ENCODE measurements at regions of chr20 and their contacts with region 1.

Region 1: DNA sequence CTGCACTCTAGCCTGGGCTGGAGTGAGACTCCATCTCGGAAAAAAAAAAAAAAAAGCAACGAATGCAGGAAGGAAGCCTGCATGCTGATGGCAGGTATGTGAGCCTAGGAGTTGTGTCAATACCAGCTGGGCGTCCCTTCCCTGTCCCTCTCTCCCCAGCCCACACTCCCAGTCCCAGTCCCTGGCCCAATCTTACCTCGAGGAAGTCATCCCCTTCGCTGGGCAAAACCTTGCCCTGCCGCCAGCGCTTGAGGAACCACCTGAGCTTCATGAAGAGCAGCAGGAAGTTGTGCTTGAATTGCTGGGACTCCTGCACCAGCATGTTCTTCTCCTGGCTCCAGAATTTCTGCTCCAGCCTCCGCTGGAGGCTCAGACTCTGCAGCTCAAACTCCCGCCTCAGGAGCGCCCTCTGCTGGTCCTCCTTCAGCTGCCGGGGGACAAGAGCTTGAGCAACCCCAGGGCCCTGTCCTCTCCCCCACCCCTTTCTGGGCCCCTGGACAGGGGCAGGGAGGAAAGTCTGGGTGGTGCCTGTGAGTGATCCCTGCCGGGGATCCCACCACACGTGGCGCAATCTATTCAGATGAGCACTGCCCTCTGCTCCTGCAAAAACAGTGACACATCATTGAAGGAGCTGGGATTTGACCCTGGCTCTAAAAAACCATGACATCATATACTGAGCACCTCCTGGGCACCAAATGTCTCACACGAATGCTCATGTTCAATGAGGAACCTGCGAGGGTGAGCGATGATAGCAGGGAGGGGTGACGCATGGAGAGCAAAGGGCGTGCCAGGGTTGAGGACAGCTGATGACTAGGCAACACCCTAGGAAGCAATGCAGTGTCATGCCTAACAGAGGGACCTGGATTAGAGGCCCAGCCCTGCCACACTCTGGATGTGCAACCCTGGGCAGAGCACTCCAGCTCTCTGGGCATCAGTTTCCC is 35.0 kb upstream of the DSN1 start:
- DNase-seq: no peak
- ATAC-seq: peak; percentile 88
- H3K4me3 ChIP-seq: no peak overlapping the region
- H3K27ac ChIP-seq: no peak overlapping the region
- H3K4me1 ChIP-seq: no peaks in the 10 kb centered on the region; the same call in 1 of the 2 replicates
- H3K27me3 ChIP-seq: no peaks in the 10 kb centered on the region
- CTCF ChIP-seq: peak; percentile 72 to 91 (median 85)
- EP300 ChIP-seq: no peak
- POLR2A ChIP-seq: no peak
- RAD21 ChIP-seq: peak; percentile 56

Region 2: DNA sequence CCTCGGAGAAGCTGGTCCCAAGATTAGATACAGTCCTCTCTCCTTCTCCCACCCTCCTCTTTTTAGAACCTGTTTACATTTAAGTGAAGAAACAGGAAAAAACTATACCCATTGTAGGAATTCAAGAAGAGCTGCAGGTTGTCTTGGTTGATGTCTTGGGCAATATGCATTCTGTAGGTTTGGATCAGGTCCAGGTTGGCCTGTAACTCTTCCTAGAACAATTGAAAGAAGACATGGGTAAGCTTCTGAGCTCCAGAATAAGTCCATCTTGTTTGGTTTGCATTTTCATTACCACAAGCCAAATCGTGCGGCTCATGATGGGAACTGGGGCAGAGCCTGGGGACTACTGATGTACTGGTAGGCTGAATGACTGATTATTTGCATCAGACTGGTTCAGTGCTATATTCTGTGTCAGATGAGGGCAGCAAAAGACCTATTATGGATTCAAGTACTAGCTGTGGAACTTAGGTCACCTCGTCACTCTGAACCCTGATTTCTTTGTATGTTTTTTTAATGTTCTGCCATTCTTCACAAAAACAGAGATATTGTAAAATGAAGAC is 142.3 kb before region 1 on chr20:
- CTCF ChIA-PET with region 1: interaction called, 11 read pairs
- POLR2A ChIA-PET with region 1: no interaction called
- RAD21 ChIA-PET with region 1: interaction called, 5 read pairs
- SMC1A ChIA-PET with region 1: interaction called, 3 read pairs
- in situ Hi-C with region 1: no loop called
- intact Hi-C with region 1: no loop called
- DNase-seq: no peak
- ATAC-seq: no peak
- H3K4me3 ChIP-seq: no peak overlapping the region
- H3K27ac ChIP-seq: no peak overlapping the region
- H3K4me1 ChIP-seq: no peaks in the 10 kb centered on the region
- H3K27me3 ChIP-seq: no peaks in the 10 kb centered on the region
- CTCF ChIP-seq: peak in 2 of 3 experiments; percentile 14 to 42; a peak in 2 of 6 replicates
- EP300 ChIP-seq: no peak
- POLR2A ChIP-seq: no peak
- RAD21 ChIP-seq: peak; percentile 38; the same call in 1 of the 2 replicates

Region 3: DNA sequence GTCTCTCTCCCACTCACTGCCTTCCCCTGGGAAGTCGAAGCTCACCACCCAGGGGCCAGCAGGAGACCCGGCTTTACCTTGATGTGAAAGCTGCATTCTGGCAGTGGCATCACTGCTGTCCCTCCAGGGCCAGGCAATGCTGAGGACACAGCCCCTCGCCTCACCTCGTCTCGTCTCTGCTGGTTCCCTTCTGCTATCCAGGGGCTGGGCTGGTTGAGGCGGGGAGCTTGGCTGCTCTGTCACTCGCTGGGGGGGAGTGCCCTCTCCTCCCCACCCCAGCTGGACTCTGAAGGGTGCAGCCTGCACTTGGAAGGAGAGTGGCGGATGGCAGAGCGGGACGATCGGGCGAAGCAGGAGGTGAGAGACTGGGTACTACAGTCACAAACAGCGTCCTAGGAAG is 22.3 kb before region 1 on chr20:
- CTCF ChIA-PET with region 1: interaction called, 12 read pairs
- POLR2A ChIA-PET with region 1: interaction called, 3 read pairs
- RAD21 ChIA-PET with region 1: no interaction called
- SMC1A ChIA-PET with region 1: no interaction called
- in situ Hi-C with region 1: no loop called
- intact Hi-C with region 1: no loop called
- DNase-seq: no peak
- ATAC-seq: no peak
- H3K4me3 ChIP-seq: no peak overlapping the region
- H3K27ac ChIP-seq: no peak overlapping the region
- H3K4me1 ChIP-seq: no peaks in the 10 kb centered on the region
- H3K27me3 ChIP-seq: no peaks in the 10 kb centered on the region
- CTCF ChIP-seq: no peak
- EP300 ChIP-seq: no peak
- POLR2A ChIP-seq: no peak
- RAD21 ChIP-seq: no peak

Region 4: DNA sequence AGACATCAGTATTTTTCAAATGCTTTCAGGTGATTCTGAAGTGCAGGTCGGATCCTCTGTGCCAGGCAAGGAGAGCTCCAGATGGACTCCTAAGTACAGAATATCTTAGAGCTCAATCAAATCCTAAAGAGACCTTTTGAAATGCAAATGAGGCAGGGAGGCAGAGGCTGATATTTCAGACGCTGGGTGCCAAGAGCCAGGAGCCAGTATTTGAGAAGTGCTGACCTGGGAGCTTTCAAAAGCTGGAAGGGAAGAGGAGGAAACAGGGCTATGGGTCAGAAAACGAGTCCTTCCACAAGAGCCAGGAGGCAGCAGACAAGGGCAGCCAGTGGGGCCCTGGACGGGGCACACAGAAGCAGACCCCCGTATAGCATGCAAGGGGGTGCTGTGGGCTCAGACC is 11.1 kb after region 1 on chr20:
- CTCF ChIA-PET with region 1: interaction called, 29 read pairs
- POLR2A ChIA-PET with region 1: no interaction called
- RAD21 ChIA-PET with region 1: interaction called, 4 read pairs
- SMC1A ChIA-PET with region 1: no interaction called
- in situ Hi-C with region 1: no loop called
- intact Hi-C with region 1: no loop called
- DNase-seq: no peak
- ATAC-seq: no peak
- H3K4me3 ChIP-seq: no peak overlapping the region
- H3K27ac ChIP-seq: no peak overlapping the region
- H3K4me1 ChIP-seq: no peaks in the 10 kb centered on the region
- H3K27me3 ChIP-seq: no peaks in the 10 kb centered on the region
- CTCF ChIP-seq: no peak
- EP300 ChIP-seq: no peak
- POLR2A ChIP-seq: no peak
- RAD21 ChIP-seq: no peak

Region 5: DNA sequence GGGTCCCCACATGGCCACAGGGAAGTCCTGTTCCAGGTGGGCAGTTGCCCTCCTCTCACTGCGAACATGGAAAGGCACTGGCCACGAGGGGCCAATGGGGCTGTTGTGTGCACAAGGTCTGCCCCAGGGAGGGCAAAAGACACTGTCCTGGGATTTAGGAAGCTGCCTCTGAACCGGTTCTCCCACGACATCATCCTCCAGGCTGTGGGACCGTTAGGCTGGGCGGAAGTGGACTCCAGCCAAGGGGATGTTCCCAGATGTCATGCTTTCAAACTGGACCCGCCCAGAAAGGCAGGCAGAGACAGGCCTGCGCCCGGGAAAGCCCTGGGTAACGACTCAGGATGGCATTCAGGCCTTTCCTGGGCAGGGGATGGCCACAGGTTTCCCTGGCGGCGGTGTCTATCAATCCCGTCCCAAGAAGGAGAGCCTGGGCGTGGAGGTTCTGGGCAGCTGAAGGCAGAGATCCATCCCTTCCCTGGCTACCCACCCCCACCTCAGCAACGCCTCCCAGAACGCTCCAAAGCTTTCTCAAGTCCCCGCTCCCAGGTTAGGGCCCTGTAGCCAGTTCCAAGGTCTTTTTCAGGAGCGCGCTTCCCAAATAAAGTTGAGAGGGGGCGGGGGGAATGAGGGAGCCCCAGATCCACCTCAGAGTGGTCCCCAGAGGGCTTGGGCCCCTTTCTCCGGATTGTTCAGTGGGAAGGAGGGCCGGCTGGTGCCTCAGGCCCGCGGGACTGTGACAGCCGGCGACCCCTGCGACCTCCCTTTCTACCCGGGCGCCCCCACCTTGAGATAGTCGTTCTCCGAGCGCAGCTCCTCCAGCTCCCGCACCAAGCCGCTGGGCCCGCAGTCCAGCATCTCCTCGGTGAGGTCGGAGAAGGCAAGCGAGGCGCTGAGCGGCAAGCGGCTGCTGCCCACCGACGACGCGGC is 53.6 kb after region 1 on chr20:
- CTCF ChIA-PET with region 1: interaction called, 22 read pairs
- POLR2A ChIA-PET with region 1: no interaction called
- RAD21 ChIA-PET with region 1: interaction called, 9 read pairs
- SMC1A ChIA-PET with region 1: interaction called, 7 read pairs
- in situ Hi-C with region 1: no loop called
- intact Hi-C with region 1: loop called (anchors 5 kb)
- DNase-seq: no peak
- ATAC-seq: no peak
- H3K4me3 ChIP-seq: peak overlapping the region; percentile 80
- H3K27ac ChIP-seq: no peak overlapping the region
- H3K4me1 ChIP-seq: peaks cover 26% of the 10 kb centered on the region
- H3K27me3 ChIP-seq: no peaks in the 10 kb centered on the region
- CTCF ChIP-seq: no peak
- EP300 ChIP-seq: no peak
- POLR2A ChIP-seq: no peak
- RAD21 ChIP-seq: no peak

Region 6: DNA sequence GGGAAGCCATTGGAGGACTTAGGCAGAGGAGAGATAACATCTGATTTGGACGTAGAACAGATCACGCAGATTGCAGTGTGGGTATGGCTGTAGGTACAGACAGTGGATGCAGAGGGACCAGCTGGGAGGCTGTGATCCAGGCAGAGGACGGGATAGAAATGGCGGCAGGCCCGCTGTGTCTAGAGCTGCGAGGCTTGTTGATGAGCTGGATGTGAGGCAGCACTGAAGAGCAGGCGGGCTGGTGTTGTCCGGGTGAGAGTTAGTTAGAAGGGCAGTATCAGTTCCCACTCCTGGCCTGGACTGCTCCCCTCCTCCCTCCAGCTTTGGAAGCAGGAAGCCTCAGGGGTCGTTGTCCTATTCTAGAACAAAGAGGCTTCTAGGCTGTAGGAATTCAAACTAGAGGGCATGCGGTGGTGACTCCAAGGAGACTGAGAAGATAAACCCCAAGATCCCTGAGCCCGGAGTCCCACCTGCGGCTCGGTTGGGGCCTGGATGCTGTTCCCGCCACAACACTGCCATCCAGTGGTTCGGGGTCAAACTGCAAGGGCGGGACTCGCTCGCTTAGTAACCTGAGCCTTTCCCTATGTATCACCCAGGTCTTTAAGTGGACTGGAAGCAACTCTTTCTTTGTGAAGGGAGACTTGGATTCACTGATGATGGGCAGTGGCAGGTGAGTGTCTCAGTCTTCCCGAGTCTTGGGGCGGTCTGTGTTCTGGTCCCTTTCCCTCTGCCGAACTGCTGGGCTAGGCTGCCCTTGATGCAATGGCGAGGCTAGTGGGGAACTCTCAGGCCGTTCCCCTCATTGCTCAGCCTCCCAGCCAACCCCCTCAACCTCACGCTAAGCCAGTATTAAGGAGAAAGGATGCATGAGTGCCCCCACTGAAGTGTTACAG is 78.5 kb after region 1 on chr20:
- CTCF ChIA-PET with region 1: interaction called, 46 read pairs
- POLR2A ChIA-PET with region 1: no interaction called
- RAD21 ChIA-PET with region 1: interaction called, 20 read pairs
- SMC1A ChIA-PET with region 1: interaction called, 12 read pairs
- in situ Hi-C with region 1: no loop called
- intact Hi-C with region 1: loop called (anchors 5 kb)
- DNase-seq: peak; percentile 56
- ATAC-seq: peak; percentile 95
- H3K4me3 ChIP-seq: no peak overlapping the region
- H3K27ac ChIP-seq: 0 out of 2 replicates have a peak overlapping the region, but pooled peaks have one; percentile 9
- H3K4me1 ChIP-seq: peaks cover 9% of the 10 kb centered on the region
- H3K27me3 ChIP-seq: no peaks in the 10 kb centered on the region
- CTCF ChIP-seq: peak; percentile 97 to 99 (median 98)
- EP300 ChIP-seq: no peak
- POLR2A ChIP-seq: no peak
- RAD21 ChIP-seq: peak; percentile 96

Region 7: DNA sequence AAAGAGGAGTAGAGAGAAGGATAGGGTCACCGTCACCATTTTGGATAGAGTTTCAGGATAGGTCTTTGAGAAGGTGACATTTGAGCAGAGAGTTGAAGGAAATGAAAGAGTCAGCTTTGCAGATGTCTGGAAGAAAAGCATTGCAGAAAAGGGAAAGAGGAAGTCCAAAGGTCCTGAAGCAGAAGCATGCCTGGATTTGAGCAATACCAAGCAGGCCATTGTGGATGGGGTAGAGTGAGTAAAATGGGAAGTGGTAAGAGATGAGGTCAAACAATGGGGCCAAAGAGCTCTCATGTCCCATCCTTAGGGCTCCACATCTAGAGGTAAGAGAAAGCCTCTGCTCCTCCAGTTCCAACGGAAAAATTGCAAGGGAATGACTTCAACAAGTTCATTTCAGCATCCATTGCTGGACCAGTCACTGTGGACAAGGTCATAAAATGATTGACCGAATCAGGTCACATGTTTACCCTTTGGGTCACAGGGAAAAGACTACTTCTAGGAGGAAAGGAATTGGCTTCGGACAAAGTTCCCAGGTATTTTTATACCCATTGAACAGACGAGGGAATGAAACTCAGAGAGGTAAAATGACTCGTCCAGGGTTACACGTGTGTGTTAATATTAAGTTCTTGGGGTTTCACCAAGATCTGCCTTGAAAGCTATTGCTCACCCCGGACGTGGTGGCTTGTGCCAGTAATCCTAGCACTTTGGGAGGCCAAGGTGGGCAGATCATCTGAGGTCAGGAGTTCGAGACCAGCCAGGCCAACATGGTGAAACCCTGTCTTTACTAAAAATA is 149.5 kb after region 1 on chr20:
- CTCF ChIA-PET with region 1: no interaction called
- POLR2A ChIA-PET with region 1: no interaction called
- RAD21 ChIA-PET with region 1: no interaction called
- SMC1A ChIA-PET with region 1: no interaction called
- in situ Hi-C with region 1: no loop called
- intact Hi-C with region 1: no loop called
- DNase-seq: no peak
- ATAC-seq: peak; percentile 73
- H3K4me3 ChIP-seq: no peak overlapping the region
- H3K27ac ChIP-seq: no peak overlapping the region
- H3K4me1 ChIP-seq: no peaks in the 10 kb centered on the region
- H3K27me3 ChIP-seq: no peaks in the 10 kb centered on the region
- CTCF ChIP-seq: no peak
- EP300 ChIP-seq: no peak
- POLR2A ChIP-seq: no peak
- RAD21 ChIP-seq: no peak

Measured in GM12878 (cell line).